ENCODE measurements at regions of chr5 and their contacts with region 1.

Region 1: GRCh38 chr5:113204525-113205161 is 228.0 kb downstream of the DCP2 start:
- DNase-seq: peak in 3 of 5 donors; percentile 23 to 77 (median 68)
- ATAC-seq: peak in 3 of 4 donors; percentile 18 to 67 (median 59)
- H3K4me3 ChIP-seq: no peak overlapping the region
- H3K27ac ChIP-seq: peak overlapping the region in 2 of 12 donors; percentile 12 to 21
- H3K4me1 ChIP-seq: peaks cover 0 to 76% (median 44%) of the 10 kb centered on the region in 12 donors
- H3K27me3 ChIP-seq: no peaks in the 10 kb centered on the region
- CTCF ChIP-seq: no peak
- POLR2A ChIP-seq: no peak

Region 2: DNA sequence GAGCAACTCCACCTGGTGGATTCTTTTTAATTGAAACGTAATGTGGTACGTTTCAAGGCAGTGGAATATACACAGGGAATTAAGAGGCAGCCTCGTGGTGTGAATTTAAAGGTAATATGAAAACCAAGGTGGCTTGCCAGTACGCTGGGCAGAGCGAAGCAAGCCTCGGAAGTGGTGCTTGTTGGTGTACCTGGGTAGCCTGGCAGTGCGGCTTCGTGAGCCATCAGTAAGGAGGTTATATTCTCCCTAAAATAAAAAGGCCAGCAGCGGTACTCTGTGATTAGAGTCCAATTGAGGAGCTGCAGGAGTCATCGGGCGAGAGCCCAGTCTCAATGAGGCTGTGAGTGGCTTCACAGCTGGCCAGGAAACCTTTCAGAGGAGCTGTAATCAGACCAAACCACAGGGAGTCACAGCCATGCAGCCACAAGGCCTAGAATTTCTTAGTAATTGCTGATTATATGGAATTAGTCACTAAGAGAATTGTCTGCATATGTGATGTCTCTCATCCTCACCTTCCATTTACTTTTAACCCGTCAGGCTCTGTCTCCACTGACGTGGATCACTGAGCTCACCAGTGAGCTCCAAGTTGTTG is 170.4 kb before region 1 on chr5:
- intact Hi-C with region 1: loop called in 1 of 10 experiments (anchors 5 kb)
- DNase-seq: peak in 1 of 5 donors; percentile 62
- ATAC-seq: peak; percentile 35 to 84 (median 70)
- H3K4me3 ChIP-seq: no peak overlapping the region
- H3K27ac ChIP-seq: peak overlapping the region in 4 of 12 donors; percentile 19 to 51 (median 32)
- H3K4me1 ChIP-seq: peaks cover 0 to 39% (median 14%) of the 10 kb centered on the region in 12 donors
- H3K27me3 ChIP-seq: no peaks in the 10 kb centered on the region
- CTCF ChIP-seq: no peak
- POLR2A ChIP-seq: no peak

Region 3: GRCh38 chr5:113081881-113082546 is 122.6 kb before region 1 on chr5:
- intact Hi-C with region 1: loop called in 1 of 10 experiments (anchors 5 kb)
- DNase-seq: no peak
- ATAC-seq: peak in 2 of 4 donors; percentile 37 to 50
- H3K4me3 ChIP-seq: no peak overlapping the region
- H3K27ac ChIP-seq: no peak overlapping the region
- H3K4me1 ChIP-seq: peaks cover 0 to 43% (median 20%) of the 10 kb centered on the region in 12 donors
- H3K27me3 ChIP-seq: no peaks in the 10 kb centered on the region
- CTCF ChIP-seq: no peak
- POLR2A ChIP-seq: no peak

Region 4: GRCh38 chr5:113090336-113091106 is 114.1 kb before region 1 on chr5:
- intact Hi-C with region 1: loop called in 3 of 10 experiments (anchors 5 to 10 kb)
- DNase-seq: peak in 1 of 5 donors; percentile 45
- ATAC-seq: peak in 3 of 4 donors; percentile 33 to 49 (median 35)
- H3K4me3 ChIP-seq: peak overlapping the region in 3 of 12 donors; percentile 4 to 14 (median 10)
- H3K27ac ChIP-seq: peak overlapping the region in 9 of 12 donors; percentile 0 to 68 (median 41)
- H3K4me1 ChIP-seq: peaks cover 3 to 79% (median 53%) of the 10 kb centered on the region in 12 donors
- H3K27me3 ChIP-seq: no peaks in the 10 kb centered on the region
- CTCF ChIP-seq: peak in 5 of 12 donors; percentile 11 to 29 (median 24)
- POLR2A ChIP-seq: no peak

Region 5: GRCh38 chr5:113250341-113250953 is 45.8 kb after region 1 on chr5:
- intact Hi-C with region 1: loop called in 1 of 10 experiments (anchors 5 kb)
- DNase-seq: peak in 4 of 5 donors; percentile 48 to 63 (median 56)
- ATAC-seq: peak; percentile 32 to 81 (median 74)
- H3K4me3 ChIP-seq: no peak overlapping the region
- H3K27ac ChIP-seq: peak overlapping the region; percentile 20 to 79 (median 56)
- H3K4me1 ChIP-seq: peaks cover 18 to 86% (median 50%) of the 10 kb centered on the region in 12 donors
- H3K27me3 ChIP-seq: no peaks in the 10 kb centered on the region
- CTCF ChIP-seq: no peak
- POLR2A ChIP-seq: no peak

Region 6: GRCh38 chr5:113513384-113514288 is 309.0 kb after region 1 on chr5 and contains the start of gene YTHDC2:
- intact Hi-C with region 1: loop called in 1 of 10 experiments (anchors 10 kb)
- DNase-seq: peak; percentile 88 to 95 (median 91)
- ATAC-seq: peak; percentile 95 to 98 (median 98)
- H3K4me3 ChIP-seq: peak within 1 kb of the TSS; percentile 77 to 96 (median 82)
- H3K27ac ChIP-seq: peak within 1 kb of the TSS; percentile 70 to 97 (median 92)
- H3K4me1 ChIP-seq: peaks cover 0 to 37% (median 16%) of the 10 kb centered on the region in 12 donors
- H3K27me3 ChIP-seq: peaks cover 0 to 13% (median 0%) of the 10 kb centered on the region in 9 donors
- CTCF ChIP-seq: peak in 10 of 12 donors; percentile 8 to 58 (median 32)
- POLR2A ChIP-seq: peak in 1 of 2 donors; percentile 73
- total RNA-seq, gene YTHDC2: 9.4 to 19.8 (median 15.1) TPM